Activated naive CD4-positive, alpha-beta T cell treated with anti-CD3 and anti-CD28 coated beads for 36 hours (primary cell): ENCODE measurements at regions of chr12 and their contacts with region 1.

Region 1: GRCh38 chr12:120356567-120357030 is 12.4 kb downstream of the MSI1 start:
- DNase-seq: peak; percentile 84
- H3K4me3 Mint-ChIP-seq: no peak overlapping the region
- H3K27ac Mint-ChIP-seq: no peak overlapping the region
- H3K4me1 Mint-ChIP-seq: peaks cover under 1% of the 10 kb centered on the region
- H3K27me3 Mint-ChIP-seq: peaks cover 15% of the 10 kb centered on the region

Region 2: GRCh38 chr12:120367233-120367923 is 10.8 kb after region 1 on chr12:
- CTCF ChIA-PET with region 1: interaction called, 10 read pairs
- intact Hi-C with region 1: no loop called
- DNase-seq: peak; percentile 36
- H3K4me3 Mint-ChIP-seq: peak overlapping the region; percentile 56
- H3K27ac Mint-ChIP-seq: no peak overlapping the region
- H3K4me1 Mint-ChIP-seq: peaks cover 15% of the 10 kb centered on the region
- H3K27me3 Mint-ChIP-seq: peaks cover 76% of the 10 kb centered on the region

Region 3: GRCh38 chr12:120428597-120429229 is 72.1 kb after region 1 on chr12:
- CTCF ChIA-PET with region 1: interaction called, 26 read pairs
- intact Hi-C with region 1: loop called (anchors 1 kb)
- DNase-seq: no peak
- H3K4me3 Mint-ChIP-seq: no peak overlapping the region
- H3K27ac Mint-ChIP-seq: no peak overlapping the region
- H3K4me1 Mint-ChIP-seq: peaks cover 3% of the 10 kb centered on the region
- H3K27me3 Mint-ChIP-seq: no peaks in the 10 kb centered on the region

Region 4: GRCh38 chr12:120620624-120621023 is 264.0 kb after region 1 on chr12:
- CTCF ChIA-PET with region 1: no interaction called
- intact Hi-C with region 1: no loop called
- DNase-seq: no peak
- H3K4me3 Mint-ChIP-seq: no peak overlapping the region
- H3K27ac Mint-ChIP-seq: no peak overlapping the region
- H3K4me1 Mint-ChIP-seq: no peaks in the 10 kb centered on the region
- H3K27me3 Mint-ChIP-seq: peaks cover 13% of the 10 kb centered on the region